Right cardiac atrium (tissue), 5 donors: ENCODE measurements at regions of chr5 and their contacts with region 1.

Region 1: DNA sequence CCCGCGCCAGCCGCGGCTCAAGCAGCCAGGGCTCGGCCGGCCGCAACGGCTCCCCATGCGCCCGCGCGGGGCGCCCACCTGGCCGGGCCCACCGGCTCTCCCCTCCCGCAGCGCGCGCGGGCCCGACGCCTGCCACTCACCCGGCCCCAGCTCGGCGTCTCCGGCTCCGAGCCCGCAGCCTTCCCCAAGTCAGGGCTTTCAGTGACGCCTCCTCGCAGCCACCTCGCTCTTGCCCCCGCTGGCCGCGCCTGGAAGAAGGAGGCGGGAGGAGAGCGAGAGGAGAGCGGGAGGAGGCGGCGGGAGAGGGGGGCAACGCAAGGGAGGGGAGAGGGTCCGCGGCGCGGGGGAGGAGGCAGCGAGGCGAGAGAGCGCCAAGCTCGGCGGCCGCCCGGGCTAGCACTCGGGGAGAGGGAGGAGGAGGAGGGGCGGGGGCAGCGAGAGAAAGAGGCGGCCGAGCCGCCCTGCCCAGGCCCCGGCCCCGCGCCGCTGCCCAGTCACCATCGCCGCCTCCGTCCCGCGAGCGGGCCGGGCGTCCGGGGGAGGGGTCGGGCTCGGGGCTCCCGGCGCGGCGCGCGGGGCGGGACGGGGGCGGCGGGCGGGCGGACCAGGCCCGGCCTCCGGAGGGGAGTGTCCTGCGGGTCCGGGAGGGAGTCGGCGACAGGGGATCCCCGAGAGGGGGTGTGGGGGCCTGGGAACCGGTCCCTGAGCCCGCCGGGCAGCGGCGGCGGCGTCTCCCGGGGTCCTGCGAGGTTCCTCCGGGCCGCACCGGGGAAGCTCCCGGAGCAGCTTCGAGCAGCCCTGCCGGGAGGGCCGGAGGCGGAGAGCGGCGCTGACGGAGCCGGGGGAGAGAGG is at the start of gene LHFPL2:
- DNase-seq: peak; percentile 88 to 95 (median 93)
- ATAC-seq: peak; percentile 90 to 93
- H3K4me3 ChIP-seq: peak within 1 kb of the TSS; percentile 75
- H3K27ac ChIP-seq: peak within 1 kb of the TSS; percentile 92
- H3K4me1 ChIP-seq: peaks cover 2% of the 10 kb centered on the region
- H3K27me3 ChIP-seq: no peaks in the 10 kb centered on the region
- total RNA-seq, gene LHFPL2: 9.7 to 21.4 (median 10.9) TPM

Region 2: GRCh38 chr5:78467752-78468357 is 180.7 kb before region 1 on chr5:
- intact Hi-C with region 1: loop called in 1 of 4 experiments (anchors 10 kb)
- DNase-seq: no peak
- ATAC-seq: peak; percentile 40 to 67
- H3K4me3 ChIP-seq: no peak overlapping the region
- H3K27ac ChIP-seq: no peak overlapping the region
- H3K4me1 ChIP-seq: no peaks in the 10 kb centered on the region
- H3K27me3 ChIP-seq: no peaks in the 10 kb centered on the region

Region 3: DNA sequence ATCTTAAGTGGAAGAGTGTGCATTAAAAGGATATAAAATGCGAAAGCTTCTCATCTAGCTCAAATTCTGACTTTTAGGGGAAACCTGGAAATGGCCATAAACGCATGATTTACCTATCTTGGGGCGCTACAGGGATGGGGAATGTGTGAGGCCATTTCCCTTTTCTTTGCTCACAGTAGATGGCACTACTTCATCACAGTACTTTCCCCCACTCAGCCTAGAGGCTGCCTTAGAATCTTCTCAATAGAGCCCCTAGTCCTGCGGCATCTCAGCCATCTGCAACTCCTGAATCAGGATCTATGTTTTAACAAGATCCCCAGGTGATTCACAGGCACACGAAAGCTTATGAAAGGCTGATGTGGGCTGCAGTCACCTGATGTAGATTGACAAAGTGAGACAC is 110.8 kb before region 1 on chr5:
- intact Hi-C with region 1: loop called in 2 of 4 experiments (anchors 10 kb)
- DNase-seq: no peak
- ATAC-seq: peak; percentile 71 to 73
- H3K4me3 ChIP-seq: no peak overlapping the region
- H3K27ac ChIP-seq: no peak overlapping the region
- H3K4me1 ChIP-seq: peaks cover 9% of the 10 kb centered on the region
- H3K27me3 ChIP-seq: no peaks in the 10 kb centered on the region

Region 4: GRCh38 chr5:78547731-78548615 is 100.6 kb before region 1 on chr5:
- intact Hi-C with region 1: loop called in 2 of 4 experiments (anchors 2 to 10 kb)
- DNase-seq: peak; percentile 93 to 94 (median 94)
- ATAC-seq: peak; percentile 92 to 94
- H3K4me3 ChIP-seq: no peak overlapping the region
- H3K27ac ChIP-seq: peak overlapping the region; percentile 93
- H3K4me1 ChIP-seq: peaks cover 17% of the 10 kb centered on the region
- H3K27me3 ChIP-seq: no peaks in the 10 kb centered on the region

Region 5: DNA sequence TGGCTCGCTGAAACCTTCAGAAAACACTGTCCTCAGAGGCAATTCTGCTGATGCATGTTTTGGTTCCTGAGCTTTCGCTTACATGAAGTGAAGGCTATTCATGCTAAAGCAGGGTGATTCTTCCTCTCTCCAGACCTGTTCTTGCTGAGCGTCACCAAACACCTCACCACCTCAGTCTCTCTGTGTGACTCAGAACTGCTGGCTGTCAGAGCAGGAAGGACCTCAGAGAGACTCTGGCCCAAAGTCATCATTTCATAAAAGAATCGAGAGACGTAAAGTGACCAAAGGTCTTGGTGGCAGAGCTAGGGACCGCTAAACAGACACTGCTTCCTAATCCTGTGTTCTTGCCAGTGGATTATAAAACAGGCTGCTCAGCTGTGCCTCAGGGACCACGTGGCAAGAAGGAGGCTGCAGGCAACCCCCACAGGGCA is 73.8 kb before region 1 on chr5:
- intact Hi-C with region 1: loop called in 1 of 4 experiments (anchors 10 kb)
- DNase-seq: no peak
- ATAC-seq: peak; percentile 71 to 82
- H3K4me3 ChIP-seq: no peak overlapping the region
- H3K27ac ChIP-seq: peak overlapping the region; percentile 25
- H3K4me1 ChIP-seq: peaks cover 14% of the 10 kb centered on the region
- H3K27me3 ChIP-seq: no peaks in the 10 kb centered on the region

Region 6: DNA sequence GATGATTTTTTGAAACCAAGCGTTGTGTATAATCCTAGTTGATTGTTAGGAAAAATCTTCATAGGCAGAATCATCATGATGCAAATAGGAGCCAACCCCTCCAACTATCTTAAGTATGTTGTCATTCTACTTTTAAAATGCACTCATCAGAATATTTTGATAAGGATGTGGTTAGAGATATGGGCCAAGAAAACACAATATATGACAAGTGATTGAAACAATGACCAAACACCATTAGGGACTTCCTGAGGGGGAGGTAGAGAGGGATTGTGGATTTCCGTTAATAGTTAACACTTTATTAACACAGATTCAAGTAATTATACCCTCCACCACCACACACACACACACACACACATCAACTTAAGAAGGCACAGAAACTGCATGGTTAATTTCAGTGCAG is 193.2 kb after region 1 on chr5:
- intact Hi-C with region 1: no loop called
- DNase-seq: no peak
- ATAC-seq: no peak
- H3K4me3 ChIP-seq: no peak overlapping the region
- H3K27ac ChIP-seq: no peak overlapping the region
- H3K4me1 ChIP-seq: no peaks in the 10 kb centered on the region
- H3K27me3 ChIP-seq: no peaks in the 10 kb centered on the region

Region 7: GRCh38 chr5:79205965-79206364 is 557.4 kb after region 1 on chr5:
- intact Hi-C with region 1: no loop called
- DNase-seq: no peak
- ATAC-seq: no peak
- H3K4me3 ChIP-seq: no peak overlapping the region
- H3K27ac ChIP-seq: no peak overlapping the region
- H3K4me1 ChIP-seq: no peaks in the 10 kb centered on the region
- H3K27me3 ChIP-seq: no peaks in the 10 kb centered on the region